PC-3 (cell line): ENCODE measurements at regions of chr2 and their contacts with region 1.

Region 1: GRCh38 chr2:127591221-127591923 is 54.6 kb upstream of the GPR17 start:
- DNase-seq: peak; percentile 84
- ATAC-seq: peak; percentile 99
- H3K4me3 ChIP-seq: no peak overlapping the region
- H3K27ac ChIP-seq: no peak overlapping the region
- H3K4me1 ChIP-seq: peaks cover 18% of the 10 kb centered on the region
- H3K27me3 ChIP-seq: no peaks in the 10 kb centered on the region
- CTCF ChIP-seq: peak; percentile 98

Region 2: GRCh38 chr2:127526149-127527000 is 65.0 kb before region 1 on chr2 and contains the start of gene IWS1:
- CTCF ChIA-PET with region 1: interaction called, 9 read pairs
- POLR2A ChIA-PET with region 1: interaction called, 4 read pairs
- intact Hi-C with region 1: loop called (anchors 1 kb)
- DNase-seq: peak; percentile 96
- ATAC-seq: peak; percentile 86
- H3K4me3 ChIP-seq: peak within 1 kb of the TSS; percentile 95
- H3K27ac ChIP-seq: peak within 1 kb of the TSS; percentile 90
- H3K4me1 ChIP-seq: peaks cover 37% of the 10 kb centered on the region
- H3K27me3 ChIP-seq: no peaks in the 10 kb centered on the region
- CTCF ChIP-seq: 0 out of 2 replicates have a peak, but pooled peaks have one; percentile 32
- total RNA-seq, gene IWS1: 51.4 and 63.6 TPM in 2 replicates

Region 3: DNA sequence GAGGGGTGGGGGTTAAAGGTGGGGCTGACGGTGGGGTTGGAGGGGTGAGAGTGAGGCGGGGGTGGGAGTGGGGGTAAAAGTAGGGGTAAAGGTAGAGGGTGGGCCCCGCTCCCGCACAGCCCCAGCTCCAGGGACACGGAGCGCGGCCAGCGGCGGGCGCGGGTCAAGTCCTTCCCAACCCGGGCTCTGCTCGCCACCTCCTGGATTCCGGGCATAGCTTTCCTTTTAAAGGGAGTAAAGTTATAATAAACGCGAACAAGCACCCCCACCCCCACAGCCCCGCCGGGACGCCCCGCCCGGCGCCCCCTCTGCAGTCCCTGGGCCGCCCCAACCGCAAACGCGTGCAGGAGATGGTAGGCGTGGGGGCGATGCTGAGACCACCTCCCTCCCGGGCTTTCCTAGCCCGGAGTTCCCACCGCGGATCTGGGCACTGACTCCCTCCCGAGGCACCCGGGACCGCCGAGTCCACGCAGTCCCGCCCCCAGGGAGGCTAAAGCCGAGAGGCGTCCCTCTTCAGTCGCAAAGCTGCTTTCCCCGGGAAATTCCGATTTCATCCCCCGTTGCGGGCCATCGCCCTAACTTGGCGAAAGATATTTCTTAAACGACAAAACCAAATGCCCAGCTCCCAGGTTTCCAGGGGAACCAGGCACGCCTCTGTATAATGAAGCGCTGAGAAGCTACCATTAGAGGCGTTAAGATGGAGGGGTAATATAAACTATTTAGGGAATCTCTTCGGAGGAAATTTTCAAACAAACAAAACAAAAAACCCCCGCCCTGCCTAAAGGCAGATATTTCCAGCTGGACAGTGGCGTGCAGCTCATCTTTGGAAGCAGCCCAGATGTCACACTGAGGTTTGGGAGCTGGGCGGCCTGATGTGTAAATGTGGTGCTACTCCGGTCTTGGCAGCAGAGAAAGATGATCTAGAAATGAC is 84.2 kb after region 1 on chr2 and contains the start of gene LIMS2:
- CTCF ChIA-PET with region 1: interaction called, 19 read pairs
- POLR2A ChIA-PET with region 1: interaction called, 3 read pairs
- intact Hi-C with region 1: loop called (anchors 1 kb)
- DNase-seq: peak; percentile 58
- ATAC-seq: peak; percentile 76
- H3K4me3 ChIP-seq: peak within 1 kb of the TSS; percentile 90
- H3K27ac ChIP-seq: no peak within 1 kb of the TSS
- H3K4me1 ChIP-seq: peaks cover 5% of the 10 kb centered on the region; the same call in 1 of the 2 replicates
- H3K27me3 ChIP-seq: no peaks in the 10 kb centered on the region
- CTCF ChIP-seq: no peak
- total RNA-seq, gene LIMS2: 4.6 and 5.0 TPM in 2 replicates